Mammary epithelial cell (primary cell): ENCODE measurements at regions of chr1 and their contacts with region 1.

Region 1: DNA sequence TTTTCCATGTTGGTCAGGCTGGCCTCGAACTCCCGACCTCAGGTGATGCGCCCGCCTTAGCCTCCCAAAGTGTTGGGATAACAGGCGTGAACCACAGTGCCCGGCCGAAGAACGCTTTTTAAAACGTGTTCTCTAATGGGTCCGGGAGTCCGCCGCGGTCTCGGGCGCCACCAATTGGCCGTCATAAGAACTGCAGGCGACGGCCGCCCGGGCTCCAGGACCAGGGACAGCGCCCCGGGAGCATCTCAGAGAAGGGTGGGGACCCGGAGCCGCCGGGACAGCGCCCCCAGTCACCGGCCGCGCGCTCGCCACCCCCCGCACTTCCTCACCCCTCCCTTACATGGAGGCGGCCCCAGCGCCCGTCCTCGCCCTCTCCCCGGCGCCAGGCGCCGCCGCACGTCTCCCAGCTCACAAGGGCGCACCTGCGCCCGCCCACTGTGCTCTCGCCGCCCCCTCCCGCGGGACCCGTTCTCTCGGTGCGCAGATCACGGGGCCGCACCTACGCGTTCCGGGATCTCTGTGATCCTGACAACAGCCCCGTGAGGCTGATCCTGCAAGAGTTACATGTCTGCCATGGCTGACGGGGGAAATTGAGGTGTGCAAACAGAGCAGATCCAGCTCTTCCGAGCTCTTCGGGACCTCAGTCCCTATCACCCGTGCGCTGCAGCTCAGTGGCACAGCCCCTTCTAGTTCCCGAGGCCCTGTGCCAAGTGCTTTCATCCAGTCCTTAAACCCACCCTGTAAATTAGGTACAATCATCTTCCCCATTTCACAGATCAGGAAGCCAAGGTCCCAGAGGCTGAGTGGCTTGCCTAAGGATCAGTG is 9.8 kb downstream of the RAP1GAP start:
- DNase-seq: peak; percentile 62
- H3K4me3 ChIP-seq: no peak overlapping the region
- H3K27ac ChIP-seq: no peak overlapping the region
- H3K4me1 ChIP-seq: peaks cover 5% of the 10 kb centered on the region
- H3K27me3 ChIP-seq: no peaks in the 10 kb centered on the region
- CTCF ChIP-seq: peak; percentile 76 to 89

Region 2: GRCh38 chr1:21534674-21535378 is 124.5 kb before region 1 on chr1:
- CTCF ChIA-PET with region 1: no interaction called
- dilution Hi-C with region 1: no loop called
- in situ Hi-C with region 1: no loop called
- intact Hi-C with region 1: loop called (anchors 1 kb)
- DNase-seq: peak; percentile 62
- H3K4me3 ChIP-seq: no peak overlapping the region
- H3K27ac ChIP-seq: no peak overlapping the region
- H3K4me1 ChIP-seq: no peaks in the 10 kb centered on the region
- H3K27me3 ChIP-seq: peaks cover 2% of the 10 kb centered on the region
- CTCF ChIP-seq: peak in 1 of 2 donors; percentile 31

Region 3: DNA sequence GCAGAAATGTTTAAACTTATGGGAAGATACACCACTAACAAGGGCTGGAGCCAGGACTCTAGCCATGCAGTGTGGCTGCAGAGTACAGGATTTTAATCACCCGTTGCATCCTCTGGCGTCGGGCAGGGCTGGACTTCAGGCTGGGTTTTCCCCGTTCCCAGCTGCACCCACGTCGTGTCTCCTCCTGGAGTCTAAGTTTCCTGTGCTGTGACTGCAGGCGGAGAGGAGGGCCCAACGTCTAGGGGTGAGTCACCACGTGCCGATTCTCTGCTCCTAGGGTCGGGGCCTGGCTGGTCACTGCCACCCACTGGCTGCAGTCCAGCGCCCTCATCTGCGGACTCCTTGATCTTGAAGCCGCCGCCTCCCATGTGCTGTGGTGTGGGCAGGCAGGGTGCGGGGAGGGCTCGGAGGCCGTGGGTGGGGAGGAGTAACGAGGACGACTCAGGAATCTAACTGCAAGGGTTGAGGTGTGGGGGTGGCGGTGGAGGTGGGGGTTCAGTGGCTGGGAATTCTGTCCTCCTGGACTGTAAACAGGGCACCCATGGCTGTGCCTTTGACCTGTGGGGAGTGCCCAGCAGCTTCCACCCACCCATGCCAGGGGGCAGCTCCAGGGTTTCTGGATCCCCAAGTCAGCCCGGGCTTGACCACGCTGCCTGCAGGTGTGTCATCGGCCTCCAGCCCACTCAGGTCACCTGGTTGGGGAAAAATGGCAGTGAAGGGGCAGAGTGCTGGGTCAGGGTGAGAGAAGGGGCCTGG is 72.3 kb before region 1 on chr1:
- CTCF ChIA-PET with region 1: no interaction called
- dilution Hi-C with region 1: no loop called
- in situ Hi-C with region 1: no loop called
- intact Hi-C with region 1: loop called (anchors 2 kb)
- DNase-seq: peak; percentile 85
- H3K4me3 ChIP-seq: no peak overlapping the region
- H3K27ac ChIP-seq: no peak overlapping the region
- H3K4me1 ChIP-seq: peaks cover 18% of the 10 kb centered on the region
- H3K27me3 ChIP-seq: no peaks in the 10 kb centered on the region
- CTCF ChIP-seq: no peak

Region 4: GRCh38 chr1:21594935-21595897 is 64.1 kb before region 1 on chr1:
- CTCF ChIA-PET with region 1: no interaction called
- dilution Hi-C with region 1: no loop called
- in situ Hi-C with region 1: no loop called
- intact Hi-C with region 1: loop called (anchors 1 kb)
- DNase-seq: peak; percentile 26
- H3K4me3 ChIP-seq: no peak overlapping the region
- H3K27ac ChIP-seq: no peak overlapping the region
- H3K4me1 ChIP-seq: peaks cover 9% of the 10 kb centered on the region
- H3K27me3 ChIP-seq: no peaks in the 10 kb centered on the region
- CTCF ChIP-seq: peak; percentile 81

Region 5: GRCh38 chr1:21869620-21870121 is 210.4 kb after region 1 on chr1:
- CTCF ChIA-PET with region 1: no interaction called
- dilution Hi-C with region 1: no loop called
- in situ Hi-C with region 1: no loop called
- intact Hi-C with region 1: no loop called
- DNase-seq: peak; percentile 95
- H3K4me3 ChIP-seq: no peak overlapping the region
- H3K27ac ChIP-seq: peak overlapping the region; percentile 5
- H3K4me1 ChIP-seq: peaks cover 40% of the 10 kb centered on the region
- H3K27me3 ChIP-seq: no peaks in the 10 kb centered on the region
- CTCF ChIP-seq: no peak